Activated naive CD4-positive, alpha-beta T cell treated with anti-CD3 and anti-CD28 coated beads for 36 hours (primary cell): ENCODE measurements at regions of chr2 and their contacts with region 1.

Region 1: DNA sequence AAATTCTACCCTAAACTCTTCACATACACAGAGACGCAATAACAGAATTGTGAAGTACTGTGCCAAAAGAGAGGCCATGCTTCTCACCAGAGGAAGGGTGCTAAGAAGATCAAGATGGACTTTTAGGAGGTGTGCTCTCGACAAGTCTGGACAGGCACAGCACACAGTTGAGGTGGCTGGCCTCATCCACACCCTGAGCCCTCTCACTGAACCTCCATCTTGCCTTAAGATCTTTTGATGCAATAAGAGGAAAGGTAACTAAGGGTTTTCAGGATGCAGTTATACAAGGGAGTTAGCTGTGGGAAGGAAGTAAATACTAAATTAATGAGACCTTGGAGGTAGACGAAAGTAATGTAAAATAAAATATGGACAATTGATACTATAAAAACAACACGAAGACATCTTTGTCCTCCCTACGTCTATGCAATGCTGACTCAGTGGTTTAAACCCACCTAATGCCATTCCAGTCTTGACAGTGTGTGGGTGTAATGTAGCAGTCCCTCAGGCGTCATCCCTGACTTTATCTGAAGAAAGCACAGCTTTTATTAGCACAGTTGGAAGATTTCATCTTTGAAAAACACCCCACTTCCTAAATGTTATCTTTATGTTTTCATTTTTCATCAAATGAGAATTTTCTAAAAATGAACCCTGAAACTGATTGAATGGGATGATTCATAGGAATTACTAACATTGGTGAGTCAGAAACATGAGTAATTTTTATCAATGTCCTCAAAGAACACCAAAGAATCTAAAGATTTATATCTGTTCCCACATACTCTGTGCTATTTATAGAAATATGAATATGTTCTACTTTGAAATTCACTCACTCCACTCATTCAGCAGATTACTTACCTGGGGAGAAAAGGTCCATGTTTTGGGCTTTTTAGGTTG is 34.0 kb upstream of the MALL start:
- DNase-seq: no peak
- H3K4me3 Mint-ChIP-seq: no peak overlapping the region
- H3K27ac Mint-ChIP-seq: peak overlapping the region; percentile 70
- H3K4me1 Mint-ChIP-seq: peaks cover 52% of the 10 kb centered on the region
- H3K27me3 Mint-ChIP-seq: peaks cover 1% of the 10 kb centered on the region

Region 2: DNA sequence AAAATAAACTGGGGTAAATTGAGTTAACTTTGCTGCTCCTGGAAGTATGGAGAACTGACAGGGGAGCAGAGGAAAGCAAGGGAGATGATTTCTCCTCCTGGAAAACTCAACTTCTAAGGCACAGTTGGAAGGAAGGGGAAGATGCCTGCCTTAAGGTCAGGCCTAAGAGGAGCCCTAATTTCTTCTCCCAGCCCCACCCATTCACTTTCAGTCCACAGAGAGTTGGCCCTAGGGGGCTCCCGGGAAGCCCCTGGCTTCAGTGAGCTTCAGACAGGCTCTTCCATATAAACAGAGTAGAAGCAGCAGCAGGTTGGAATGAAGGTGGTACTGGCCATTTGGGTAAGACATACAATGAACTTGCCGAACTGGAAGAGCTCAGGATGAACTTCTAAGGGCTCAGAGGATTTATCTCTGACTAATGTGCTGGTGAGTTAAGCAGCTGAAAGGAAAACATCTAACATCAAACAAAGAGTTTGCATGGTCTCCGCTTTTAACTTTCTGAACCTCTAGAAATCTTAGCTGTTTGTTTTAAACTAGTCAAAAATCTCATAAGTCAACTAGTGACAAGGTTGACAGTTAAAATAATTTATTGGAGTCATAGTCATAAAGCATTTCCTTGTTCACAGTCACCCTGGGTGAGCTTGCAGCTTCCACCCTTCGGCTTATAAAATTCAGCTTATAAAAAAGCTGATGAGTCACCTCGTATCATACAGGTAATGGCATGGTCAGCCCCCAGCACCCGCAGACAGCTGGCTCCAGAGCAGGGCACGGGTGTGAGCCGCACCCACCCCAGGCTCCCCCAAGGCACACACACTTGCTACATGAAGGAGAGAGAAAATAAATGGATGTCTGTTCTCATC is 43.7 kb before region 1 on chr2:
- CTCF ChIA-PET with region 1: no interaction called
- intact Hi-C with region 1: loop called (anchors 2 kb)
- DNase-seq: peak; percentile 42
- H3K4me3 Mint-ChIP-seq: no peak overlapping the region
- H3K27ac Mint-ChIP-seq: no peak overlapping the region
- H3K4me1 Mint-ChIP-seq: peaks cover 29% of the 10 kb centered on the region
- H3K27me3 Mint-ChIP-seq: peaks cover 62% of the 10 kb centered on the region

Region 3: DNA sequence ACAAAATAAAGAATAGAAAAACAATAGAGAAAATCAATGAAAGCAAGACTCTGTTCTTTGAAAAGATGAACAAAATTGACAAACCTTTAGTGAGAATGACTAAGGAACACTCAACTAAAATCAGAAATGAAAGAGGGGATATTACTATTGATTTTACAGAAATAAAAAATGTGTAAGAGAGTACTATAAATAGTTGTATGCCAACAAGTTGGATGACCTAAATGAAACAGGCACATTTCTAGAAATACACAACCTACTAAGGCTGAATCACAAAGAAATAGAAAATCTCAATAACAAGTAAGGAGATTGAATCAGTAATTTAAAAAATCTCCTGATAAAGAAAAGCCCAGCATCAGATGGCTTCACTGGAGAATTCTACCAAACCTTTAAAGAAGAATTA is 15.6 kb before region 1 on chr2:
- CTCF ChIA-PET with region 1: no interaction called
- intact Hi-C with region 1: loop called (anchors 1 kb)
- DNase-seq: no peak
- H3K4me3 Mint-ChIP-seq: no peak overlapping the region
- H3K27ac Mint-ChIP-seq: peak overlapping the region; percentile 73
- H3K4me1 Mint-ChIP-seq: peaks cover 24% of the 10 kb centered on the region
- H3K27me3 Mint-ChIP-seq: peaks cover 4% of the 10 kb centered on the region